OCI-LY7 (cell line): ENCODE measurements at regions of chrX and their contacts with region 1.

Region 1: DNA sequence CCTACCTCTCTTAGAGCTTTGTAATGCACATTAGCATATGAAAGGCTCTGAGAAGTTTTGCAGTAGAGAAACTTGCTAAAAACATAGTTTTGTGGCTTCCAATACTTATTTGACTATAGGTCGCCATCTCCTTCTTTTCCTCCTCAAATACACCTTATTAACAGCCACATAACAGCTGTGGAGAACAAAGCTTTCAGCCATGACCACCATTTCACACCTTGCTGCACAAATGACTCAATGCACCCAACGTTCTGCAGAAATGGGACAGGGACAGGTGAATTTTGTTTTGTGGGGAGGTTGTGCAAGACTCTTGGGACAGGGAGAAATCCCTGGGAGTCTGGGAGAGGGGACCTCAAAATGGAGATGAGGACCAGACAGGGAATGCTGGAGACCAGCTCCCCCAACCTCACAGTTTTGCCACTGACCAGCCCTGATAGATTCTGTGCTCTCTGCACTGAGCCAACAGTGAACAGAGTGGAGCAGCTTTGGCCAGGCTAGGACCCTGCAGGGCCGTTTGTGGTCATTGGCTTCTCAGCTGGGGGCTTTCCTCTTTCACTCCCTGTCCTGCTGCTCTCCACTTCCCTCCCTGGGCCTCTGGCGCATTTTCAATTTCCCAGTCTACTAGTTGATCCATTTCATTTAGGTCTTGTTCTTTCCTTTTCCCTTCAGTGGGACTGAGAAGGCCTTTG is 16.6 kb downstream of the FRMPD3 start:
- DNase-seq: peak; percentile 82
- H3K4me3 ChIP-seq: peak overlapping the region; percentile 61
- H3K27ac ChIP-seq: peak overlapping the region; percentile 98
- H3K4me1 ChIP-seq: peaks cover 92% of the 10 kb centered on the region
- CTCF ChIP-seq: no peak

Region 2: GRCh38 chrX:107448998-107449835 is 16.9 kb before region 1 on chrX and contains the start of gene FRMPD3:
- CTCF ChIA-PET with region 1: interaction called, 11 read pairs
- POLR2A ChIA-PET with region 1: interaction called, 42 read pairs
- intact Hi-C with region 1: loop called (anchors 2 kb)
- DNase-seq: peak; percentile 70
- H3K4me3 ChIP-seq: peak within 1 kb of the TSS; percentile 73
- H3K27ac ChIP-seq: peak within 1 kb of the TSS; percentile 86
- H3K4me1 ChIP-seq: peaks cover 71% of the 10 kb centered on the region
- CTCF ChIP-seq: no peak; the same call in 1 of the 2 replicates
- total RNA-seq, gene FRMPD3: 5.8 and 6.5 TPM in 2 replicates

Region 3: DNA sequence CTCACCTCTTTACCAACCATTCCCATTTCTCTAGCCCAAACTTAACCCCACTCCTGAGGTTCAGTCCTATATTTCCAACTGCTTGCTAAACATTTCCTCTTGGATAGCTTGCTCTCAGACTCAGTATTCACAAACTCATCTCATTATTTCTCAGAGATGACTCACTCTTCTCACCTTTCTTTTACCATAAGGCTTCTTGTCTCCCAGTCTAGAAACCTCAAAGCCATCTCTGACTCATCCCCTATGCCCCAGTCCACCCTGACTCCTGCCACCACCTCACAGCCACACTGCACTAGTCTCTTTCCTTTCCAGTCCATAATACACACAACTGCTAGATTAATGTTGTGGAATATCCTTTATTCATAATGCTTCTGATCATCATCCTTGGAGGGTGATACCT is 11.8 kb before region 1 on chrX:
- CTCF ChIA-PET with region 1: interaction called, 11 read pairs
- POLR2A ChIA-PET with region 1: interaction called, 42 read pairs
- intact Hi-C with region 1: loop called (anchors 2 kb)
- DNase-seq: no peak
- H3K4me3 ChIP-seq: peak overlapping the region; percentile 23
- H3K27ac ChIP-seq: no peak overlapping the region
- H3K4me1 ChIP-seq: peaks cover 50% of the 10 kb centered on the region
- CTCF ChIP-seq: no peak

Region 4: DNA sequence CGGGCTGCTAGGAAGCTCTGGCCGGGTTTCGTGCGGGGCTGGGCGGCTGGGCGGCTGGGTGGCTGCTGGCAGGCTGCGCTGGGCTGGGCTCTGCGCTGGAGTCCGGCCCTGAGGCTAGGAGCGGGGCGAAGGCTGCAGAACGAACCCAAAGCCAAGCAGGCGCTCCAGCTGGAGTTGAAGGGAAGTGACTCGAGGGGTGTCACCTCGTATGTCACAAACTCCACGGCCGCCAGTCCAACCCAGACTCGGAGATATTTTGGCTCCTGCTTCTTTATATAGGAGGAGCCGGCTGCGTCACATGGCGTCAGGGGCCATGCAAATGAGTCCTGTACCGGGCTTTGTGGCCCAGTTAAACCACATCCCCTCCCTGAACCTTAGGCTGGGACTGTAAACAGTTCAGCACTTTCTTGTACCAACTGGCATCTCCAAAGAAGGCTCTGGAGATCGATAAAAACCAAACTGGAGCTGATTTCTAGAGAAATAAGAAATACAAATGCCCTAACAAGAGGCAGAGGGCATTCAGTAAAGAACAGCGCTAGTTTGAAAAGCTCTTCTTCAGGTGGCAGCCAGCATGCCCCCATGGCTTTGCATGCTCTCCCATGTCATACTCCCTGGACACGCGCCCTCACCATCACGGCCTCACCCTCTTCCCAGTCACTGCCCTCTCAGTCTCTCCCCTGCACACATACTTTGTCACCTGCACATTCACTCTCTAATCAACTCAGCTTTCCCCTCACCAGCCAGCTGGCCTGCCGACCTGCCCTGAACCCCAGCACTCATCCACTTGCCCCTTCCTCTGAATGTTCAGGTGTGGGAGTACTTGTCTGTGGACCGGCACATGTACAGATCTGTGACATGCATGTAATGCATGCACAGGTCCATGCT is 251.0 kb after region 1 on chrX:
- CTCF ChIA-PET with region 1: no interaction called
- POLR2A ChIA-PET with region 1: no interaction called
- intact Hi-C with region 1: loop called (anchors 5 kb)
- DNase-seq: peak; percentile 87
- H3K4me3 ChIP-seq: peak overlapping the region; percentile 91
- H3K27ac ChIP-seq: peak overlapping the region; percentile 85
- H3K4me1 ChIP-seq: peaks cover 59% of the 10 kb centered on the region
- CTCF ChIP-seq: no peak